ENCODE measurements at regions of chr17 and their contacts with region 1.

Region 1: GRCh38 chr17:49556223-49556971 is 19.3 kb upstream of the NXPH3 start:
- DNase-seq: peak; percentile 92 to 98
- H3K4me3 ChIP-seq: peak overlapping the region; percentile 8; the same call in 1 of the 2 replicates
- H3K4me3 Mint-ChIP-seq: peak overlapping the region; percentile 27
- H3K27ac Mint-ChIP-seq: no peak overlapping the region
- H3K4me1 ChIP-seq: peaks cover 3% of the 10 kb centered on the region; the same call in 1 of the 2 replicates
- H3K4me1 Mint-ChIP-seq: peaks cover 12% of the 10 kb centered on the region
- H3K27me3 ChIP-seq: no peaks in the 10 kb centered on the region
- H3K27me3 Mint-ChIP-seq: peaks cover 6% of the 10 kb centered on the region
- CTCF ChIP-seq: peak; percentile 100

Region 2: DNA sequence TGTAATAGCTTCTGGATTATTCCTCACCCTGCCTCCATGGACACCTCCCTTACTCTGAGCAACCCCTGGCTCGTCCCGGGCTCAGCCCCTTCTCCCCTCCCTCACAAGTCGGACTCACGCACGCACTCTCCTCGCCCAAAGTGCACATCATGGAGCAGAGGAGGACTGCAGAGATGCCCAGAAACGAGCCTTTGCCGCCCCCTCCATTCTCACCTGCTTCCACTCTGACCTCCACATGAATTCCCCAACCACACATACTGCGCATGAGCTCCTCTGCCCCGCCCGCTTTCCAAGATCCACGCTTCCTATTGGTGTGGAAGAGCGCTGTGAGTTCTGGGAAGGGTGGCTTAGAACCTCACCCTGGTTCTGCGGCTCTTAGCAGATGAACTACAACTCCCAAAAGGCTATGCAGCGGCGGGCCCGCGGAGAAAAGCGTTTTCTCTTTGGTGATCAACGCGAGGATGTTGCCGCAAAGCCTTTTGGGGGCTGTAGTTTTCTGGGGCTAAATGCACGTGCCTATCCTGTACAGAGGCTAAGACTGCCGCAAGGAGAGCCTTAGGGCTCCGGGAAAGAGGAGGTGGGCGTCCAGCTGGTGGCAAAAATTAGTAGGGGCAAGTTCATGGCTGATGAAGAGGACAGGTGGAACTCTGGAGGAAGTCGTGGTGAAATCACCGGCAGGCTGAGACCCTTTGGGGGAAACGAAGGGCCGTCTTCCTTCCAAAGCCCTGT is 141.6 kb before region 1 on chr17 and contains the start of gene PHB1:
- CTCF ChIA-PET with region 1: interaction called, 106 read pairs
- POLR2A ChIA-PET with region 1: interaction called, 3 read pairs
- intact Hi-C with region 1: no loop called
- DNase-seq: peak; percentile 100
- H3K4me3 ChIP-seq: peak within 1 kb of the TSS; percentile 61
- H3K4me3 Mint-ChIP-seq: peak within 1 kb of the TSS; percentile 88
- H3K27ac Mint-ChIP-seq: peak within 1 kb of the TSS; percentile 84
- H3K4me1 ChIP-seq: peaks cover 4% of the 10 kb centered on the region
- H3K4me1 Mint-ChIP-seq: no peaks in the 10 kb centered on the region
- H3K27me3 ChIP-seq: no peaks in the 10 kb centered on the region
- H3K27me3 Mint-ChIP-seq: no peaks in the 10 kb centered on the region
- CTCF ChIP-seq: no peak
- total RNA-seq, gene PHB1: 761 and 848 TPM in 2 replicates

Region 3: DNA sequence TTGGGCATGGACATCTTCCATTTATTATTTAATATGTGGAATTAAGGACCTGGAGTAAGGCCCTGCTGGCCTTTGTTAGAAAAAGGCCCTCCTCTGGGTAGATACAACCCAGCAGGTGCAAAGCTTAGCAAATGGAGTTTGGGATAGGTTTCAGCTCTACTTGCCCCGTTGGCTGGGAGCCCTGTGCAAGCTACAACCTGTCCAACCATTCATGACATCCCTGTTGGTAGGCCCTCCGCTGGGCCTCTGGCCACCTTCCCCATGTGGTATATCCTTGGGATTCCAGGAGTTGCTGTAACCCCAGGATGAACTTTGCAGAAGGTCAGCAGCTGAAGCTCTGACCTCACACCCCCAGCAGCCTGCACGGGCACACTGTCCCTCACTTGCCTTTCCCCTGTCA is 54.9 kb before region 1 on chr17:
- CTCF ChIA-PET with region 1: interaction called, 91 read pairs
- POLR2A ChIA-PET with region 1: no interaction called
- intact Hi-C with region 1: loop called (anchors 1 kb)
- DNase-seq: no peak
- H3K4me3 ChIP-seq: no peak overlapping the region
- H3K4me3 Mint-ChIP-seq: no peak overlapping the region
- H3K27ac Mint-ChIP-seq: no peak overlapping the region
- H3K4me1 ChIP-seq: peaks cover 13% of the 10 kb centered on the region
- H3K4me1 Mint-ChIP-seq: peaks cover 7% of the 10 kb centered on the region
- H3K27me3 ChIP-seq: peaks cover 18% of the 10 kb centered on the region
- H3K27me3 Mint-ChIP-seq: peaks cover 37% of the 10 kb centered on the region
- CTCF ChIP-seq: no peak

Region 4: DNA sequence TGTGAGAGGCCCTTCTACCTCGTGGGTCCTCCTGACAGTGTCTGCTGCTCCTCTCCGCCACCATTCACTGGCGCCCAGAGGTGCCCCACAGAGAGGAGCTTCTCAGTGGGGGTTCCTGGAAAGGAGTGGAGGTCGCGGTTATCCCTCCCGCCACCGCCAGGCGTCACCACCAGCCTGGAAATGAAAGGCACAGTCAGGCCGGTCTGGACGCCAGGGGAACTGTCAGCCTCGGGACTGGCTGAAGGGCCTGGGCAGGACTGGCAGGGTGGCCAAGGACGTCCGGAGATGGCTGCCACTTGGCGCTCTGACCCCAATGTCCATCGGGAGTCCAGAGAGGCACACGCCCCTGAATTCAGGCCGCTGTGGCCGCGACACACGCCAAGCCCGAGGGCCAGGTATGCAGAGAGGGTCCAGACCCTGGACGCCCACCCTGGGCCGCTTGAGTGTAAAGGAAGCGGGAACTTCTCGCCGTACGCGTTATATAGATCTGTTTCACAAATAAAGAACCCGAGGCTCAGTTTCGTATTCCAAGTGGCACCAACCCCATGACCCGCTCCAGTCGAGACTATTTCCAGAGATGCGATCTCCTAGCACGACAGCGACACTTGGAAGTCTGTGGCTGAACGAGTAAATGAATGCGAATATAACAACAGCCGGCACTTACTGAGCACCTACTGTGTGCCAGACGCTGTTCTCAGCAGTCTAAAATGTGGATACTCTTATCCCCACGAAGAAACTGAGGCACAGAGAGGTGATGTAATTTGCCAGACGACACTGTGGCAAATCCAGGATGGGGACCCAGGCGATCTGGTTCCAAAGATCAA is 11.7 kb after region 1 on chr17:
- CTCF ChIA-PET with region 1: interaction called, 36 read pairs
- POLR2A ChIA-PET with region 1: no interaction called
- intact Hi-C with region 1: no loop called
- DNase-seq: peak; percentile 97 to 99
- H3K4me3 ChIP-seq: peak overlapping the region; percentile 41
- H3K4me3 Mint-ChIP-seq: peak overlapping the region; percentile 73
- H3K27ac Mint-ChIP-seq: no peak overlapping the region
- H3K4me1 ChIP-seq: peaks cover 4% of the 10 kb centered on the region
- H3K4me1 Mint-ChIP-seq: peaks cover 7% of the 10 kb centered on the region
- H3K27me3 ChIP-seq: no peaks in the 10 kb centered on the region; the same call in 1 of the 2 replicates
- H3K27me3 Mint-ChIP-seq: peaks cover 19% of the 10 kb centered on the region
- CTCF ChIP-seq: peak; percentile 99 to 100

Region 5: DNA sequence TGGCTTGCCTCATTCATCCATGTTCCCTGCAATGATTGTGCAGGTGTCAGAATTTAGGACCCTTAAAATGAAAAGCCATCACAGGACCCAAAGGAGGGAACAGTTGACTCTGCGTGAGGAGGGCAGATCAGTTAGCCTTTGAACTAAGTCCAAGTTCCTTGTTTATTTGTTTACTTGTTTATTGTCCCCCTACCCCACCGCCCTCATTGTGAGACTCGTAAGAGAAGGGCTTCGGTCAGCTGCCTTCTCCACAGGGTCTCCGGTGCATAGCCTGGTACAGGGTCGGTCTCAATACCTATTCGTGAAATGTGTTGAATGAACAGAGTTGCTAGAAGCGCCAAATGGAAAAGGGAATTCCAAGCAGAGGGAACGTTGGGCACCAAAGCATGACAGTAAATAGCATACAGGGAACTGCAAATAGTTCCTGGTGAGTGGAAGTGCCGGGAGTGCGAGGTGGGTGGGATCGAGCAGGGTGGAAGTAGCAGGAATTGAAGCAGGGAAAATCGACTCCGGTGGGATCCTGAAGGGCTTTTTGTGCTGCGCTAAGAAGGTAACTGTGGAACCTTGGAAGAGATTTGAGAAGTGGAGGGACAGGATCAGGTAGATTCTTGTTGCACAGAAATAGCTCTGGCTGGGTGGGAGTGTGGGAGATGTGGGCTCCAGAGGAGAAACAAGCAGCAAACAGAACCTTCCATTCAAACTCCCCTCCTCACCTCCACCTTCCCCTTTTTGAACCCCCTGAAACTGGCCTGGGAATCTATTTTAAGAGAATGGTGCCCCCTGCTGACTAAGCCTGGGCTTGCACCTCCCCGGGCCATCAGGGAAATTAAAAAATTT is 138.7 kb after region 1 on chr17:
- CTCF ChIA-PET with region 1: interaction called, 44 read pairs
- POLR2A ChIA-PET with region 1: no interaction called
- intact Hi-C with region 1: no loop called
- DNase-seq: peak; percentile 69 to 84
- H3K4me3 ChIP-seq: no peak overlapping the region
- H3K4me3 Mint-ChIP-seq: peak overlapping the region; percentile 48
- H3K27ac Mint-ChIP-seq: no peak overlapping the region
- H3K4me1 ChIP-seq: no peaks in the 10 kb centered on the region; the same call in 1 of the 2 replicates
- H3K4me1 Mint-ChIP-seq: peaks cover 18% of the 10 kb centered on the region
- H3K27me3 ChIP-seq: no peaks in the 10 kb centered on the region
- H3K27me3 Mint-ChIP-seq: peaks cover 5% of the 10 kb centered on the region
- CTCF ChIP-seq: peak; percentile 99 to 100